Gastrocnemius medialis (tissue), 4 donors: ENCODE measurements at regions of chr7 and their contacts with region 1.

Region 1: GRCh38 chr7:50502001-50502684 is 52.0 kb upstream of the FIGNL1 start:
- DNase-seq: peak; percentile 91 to 97
- ATAC-seq: peak; percentile 83 to 88
- H3K4me3 ChIP-seq: peak overlapping the region in 1 of 4 donors; percentile 45
- H3K27ac ChIP-seq: peak overlapping the region; percentile 90 to 99 (median 97)
- H3K4me1 ChIP-seq: peaks cover 53 to 61% of the 10 kb centered on the region in 2 donors
- H3K27me3 ChIP-seq: no peaks in the 10 kb centered on the region
- CTCF ChIP-seq: peak in 1 of 5 experiments; percentile 4
- POLR2A ChIP-seq: peak in 1 of 2 donors; percentile 63

Region 2: DNA sequence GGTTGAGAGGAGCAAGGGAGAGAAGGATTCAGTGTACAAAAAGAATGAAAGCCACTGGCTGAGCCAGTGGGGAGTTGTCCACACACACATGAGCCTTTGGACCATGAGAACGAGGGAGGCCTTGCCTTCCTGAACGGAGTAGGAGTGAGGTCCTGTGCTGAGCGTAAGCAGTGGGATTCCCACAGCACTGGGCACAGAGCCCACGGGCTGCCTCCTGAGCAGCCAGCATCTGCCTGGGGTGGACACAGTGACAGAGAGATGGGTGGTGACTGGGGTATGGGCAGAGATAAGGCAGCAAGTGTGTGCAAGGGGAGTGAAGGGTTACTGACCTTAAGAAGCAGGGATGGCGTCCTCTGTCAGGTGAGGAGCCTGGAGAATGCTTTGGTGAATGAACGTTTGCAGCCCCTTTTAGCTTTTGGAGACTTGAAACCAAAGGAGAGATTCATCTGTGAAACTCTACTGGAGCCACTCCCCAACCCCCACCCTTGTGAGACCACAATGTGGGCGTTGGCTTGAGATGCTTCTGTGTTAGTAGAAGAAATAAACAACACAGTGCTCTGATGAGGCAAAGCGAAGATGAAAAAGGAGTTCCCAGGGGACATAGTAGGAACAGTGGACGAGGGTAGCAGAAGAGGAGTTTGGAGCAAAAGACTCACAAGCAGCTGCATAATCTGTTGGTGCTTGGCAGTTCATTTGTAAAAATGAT is 108.4 kb before region 1 on chr7:
- in situ Hi-C with region 1: no loop called
- intact Hi-C with region 1: no loop called
- DNase-seq: no peak
- ATAC-seq: no peak
- H3K4me3 ChIP-seq: no peak overlapping the region
- H3K27ac ChIP-seq: no peak overlapping the region
- H3K4me1 ChIP-seq: no peaks in the 10 kb centered on the region
- H3K27me3 ChIP-seq: peaks cover 0 to 5% (median 4%) of the 10 kb centered on the region in 3 donors
- CTCF ChIP-seq: no peak
- POLR2A ChIP-seq: no peak

Region 3: DNA sequence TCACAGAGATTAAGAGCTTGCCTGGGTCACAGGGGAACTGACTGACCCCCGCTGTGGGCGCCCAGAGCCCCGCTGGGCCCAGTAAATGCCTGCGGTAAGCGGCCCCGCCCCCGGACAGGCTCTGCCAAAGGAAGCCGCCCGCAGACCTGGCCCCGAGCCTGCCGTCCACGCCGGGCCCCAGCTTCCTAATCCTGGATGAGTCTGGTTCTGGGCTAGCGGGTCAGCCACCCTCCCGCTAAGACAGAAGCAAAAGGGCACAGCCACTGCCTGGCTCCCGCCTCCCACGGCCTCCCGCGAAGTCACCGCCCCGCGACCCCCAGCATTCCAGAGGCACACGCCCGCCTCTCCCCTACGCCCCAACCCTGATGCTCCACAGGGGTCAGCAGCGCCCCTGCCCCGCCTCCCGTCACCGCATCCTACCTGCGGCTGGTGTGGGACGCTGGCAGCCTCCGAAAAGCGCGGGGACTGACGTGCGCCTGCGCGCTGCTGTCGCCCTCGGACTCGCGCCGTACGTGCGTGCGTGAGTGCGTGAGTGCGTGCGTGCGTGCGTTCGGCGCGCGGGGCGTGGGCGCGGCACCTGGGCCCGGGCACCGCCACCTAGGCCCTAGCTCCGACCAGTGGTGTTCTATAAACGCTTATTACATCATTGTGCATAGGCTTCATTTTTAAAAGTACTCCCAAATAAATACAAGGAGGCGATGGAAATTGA is 52.1 kb before region 1 on chr7 and contains the start of gene FIGNL1:
- in situ Hi-C with region 1: no loop called
- intact Hi-C with region 1: no loop called
- DNase-seq: peak; percentile 44 to 72
- ATAC-seq: peak; percentile 91 to 92
- H3K4me3 ChIP-seq: peak within 1 kb of the TSS; percentile 65 to 87 (median 82)
- H3K27ac ChIP-seq: peak within 1 kb of the TSS; percentile 69 to 83 (median 80)
- H3K4me1 ChIP-seq: peaks cover 15 to 16% of the 10 kb centered on the region in 2 donors
- H3K27me3 ChIP-seq: no peaks in the 10 kb centered on the region
- CTCF ChIP-seq: no peak
- POLR2A ChIP-seq: peak in 1 of 2 donors; percentile 25
- total RNA-seq, gene FIGNL1: 2.3 to 9.2 (median 6.2) TPM

Region 4: DNA sequence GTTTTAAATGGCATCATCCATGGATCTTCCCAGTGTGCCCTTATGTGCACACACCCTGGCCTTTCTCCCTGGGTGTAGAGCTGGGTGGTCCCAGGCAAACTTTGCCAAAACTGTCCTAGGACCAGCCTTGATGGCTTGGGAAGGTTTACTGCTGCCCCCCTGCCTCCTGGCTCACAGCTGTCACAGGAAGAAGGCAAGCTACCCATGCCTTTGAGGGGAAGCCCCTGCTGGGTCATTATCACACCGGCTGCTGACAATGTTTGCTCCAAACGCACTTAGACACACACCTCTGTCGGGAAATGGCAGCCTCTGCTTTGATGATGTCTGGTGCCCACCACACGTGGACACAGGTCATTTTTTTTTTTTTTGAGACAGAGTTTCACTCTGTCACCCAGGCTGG is 26.8 kb before region 1 on chr7:
- in situ Hi-C with region 1: no loop called
- intact Hi-C with region 1: loop called (anchors 2 kb)
- DNase-seq: no peak
- ATAC-seq: no peak
- H3K4me3 ChIP-seq: no peak overlapping the region
- H3K27ac ChIP-seq: no peak overlapping the region
- H3K4me1 ChIP-seq: peaks cover 8 to 18% of the 10 kb centered on the region in 2 donors
- H3K27me3 ChIP-seq: no peaks in the 10 kb centered on the region
- CTCF ChIP-seq: no peak
- POLR2A ChIP-seq: no peak

Region 5: GRCh38 chr7:50632561-50633413 is 130.6 kb after region 1 on chr7:
- in situ Hi-C with region 1: no loop called
- intact Hi-C with region 1: loop called (anchors 2 kb)
- DNase-seq: peak in 1 of 2 donors; percentile 68
- ATAC-seq: peak in 1 of 2 donors; percentile 50
- H3K4me3 ChIP-seq: no peak overlapping the region
- H3K27ac ChIP-seq: peak overlapping the region; percentile 77 to 93 (median 82)
- H3K4me1 ChIP-seq: peaks cover 60 to 79% of the 10 kb centered on the region in 2 donors
- H3K27me3 ChIP-seq: no peaks in the 10 kb centered on the region
- CTCF ChIP-seq: peak; percentile 75 to 91 (median 81)
- POLR2A ChIP-seq: no peak

Region 6: DNA sequence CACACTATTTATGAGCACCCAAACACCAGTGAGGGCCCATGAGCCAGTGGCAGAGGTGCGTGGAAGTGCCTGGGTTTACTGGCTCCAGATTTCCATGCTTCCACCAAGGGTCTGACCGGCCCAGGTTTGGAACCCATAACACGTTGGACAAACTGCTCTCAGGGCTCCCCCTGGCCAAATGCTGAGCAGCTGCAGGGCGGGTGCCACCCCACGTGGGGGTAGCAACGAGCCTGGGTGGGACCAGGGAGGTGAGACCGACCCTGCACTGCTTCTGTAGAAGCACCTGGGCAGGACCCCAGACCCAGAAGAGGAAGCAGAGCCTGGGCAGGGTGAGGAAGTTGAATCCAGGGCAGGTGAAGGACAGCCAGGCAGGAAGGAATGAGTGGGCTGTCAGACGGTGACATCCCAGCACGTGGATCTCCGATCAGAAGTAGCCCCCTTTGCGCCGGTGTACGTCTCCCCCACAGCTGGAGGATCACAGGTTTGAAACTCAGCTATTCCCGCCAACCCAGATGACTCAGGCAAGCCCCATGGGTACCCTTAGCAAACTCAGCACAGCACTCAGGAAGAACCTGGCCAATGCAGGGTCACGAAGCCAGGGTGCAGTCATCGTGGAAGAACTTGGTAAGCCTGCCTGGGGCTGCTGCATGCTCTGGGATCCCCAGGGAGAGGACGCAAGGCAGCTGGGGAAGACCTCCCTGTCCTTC is 163.4 kb after region 1 on chr7:
- in situ Hi-C with region 1: loop called in 1 of 4 experiments (anchors 5 kb)
- intact Hi-C with region 1: no loop called
- DNase-seq: peak in 1 of 2 donors; percentile 62
- ATAC-seq: no peak
- H3K4me3 ChIP-seq: no peak overlapping the region
- H3K27ac ChIP-seq: peak overlapping the region; percentile 85 to 97 (median 92)
- H3K4me1 ChIP-seq: peaks cover 80 to 89% of the 10 kb centered on the region in 2 donors
- H3K27me3 ChIP-seq: no peaks in the 10 kb centered on the region
- CTCF ChIP-seq: no peak
- POLR2A ChIP-seq: no peak

Region 7: GRCh38 chr7:51288896-51289622 is 786.9 kb after region 1 on chr7:
- in situ Hi-C with region 1: no loop called
- intact Hi-C with region 1: loop called (anchors 10 kb)
- DNase-seq: peak; percentile 35 to 64
- ATAC-seq: peak; percentile 63 to 81
- H3K4me3 ChIP-seq: peak overlapping the region; percentile 16 to 37 (median 26)
- H3K27ac ChIP-seq: peak overlapping the region; percentile 79 to 88 (median 84)
- H3K4me1 ChIP-seq: peaks cover 48 to 60% of the 10 kb centered on the region in 2 donors
- H3K27me3 ChIP-seq: no peaks in the 10 kb centered on the region
- CTCF ChIP-seq: no peak
- POLR2A ChIP-seq: peak in 1 of 2 donors; percentile 12